ENCODE measurements at regions of chr12 and their contacts with region 1.

Region 1: GRCh38 chr12:64610149-64610678 is at the start of gene RASSF3:
- DNase-seq: peak; percentile 61 to 72 (median 68)
- H3K4me3 ChIP-seq: peak within 1 kb of the TSS; percentile 64 to 98 (median 94)
- H3K4me3 Mint-ChIP-seq: peak within 1 kb of the TSS; percentile 96 to 98
- H3K27ac ChIP-seq: peak within 1 kb of the TSS; percentile 92 to 96
- H3K27ac Mint-ChIP-seq: peak within 1 kb of the TSS; percentile 89 to 99 (median 96)
- H3K4me1 ChIP-seq: peaks cover 42 to 54% of the 10 kb centered on the region in 2 donors
- H3K4me1 Mint-ChIP-seq: peaks cover 42% of the 10 kb centered on the region
- H3K27me3 ChIP-seq: no peaks in the 10 kb centered on the region
- H3K27me3 Mint-ChIP-seq: peaks cover 0 to 1% (median 1%) of the 10 kb centered on the region in 3 donors
- CTCF ChIP-seq: no peak
- polyA plus RNA-seq, gene RASSF3: 6.6 to 77.9 (median 14.5) TPM

Region 2: DNA sequence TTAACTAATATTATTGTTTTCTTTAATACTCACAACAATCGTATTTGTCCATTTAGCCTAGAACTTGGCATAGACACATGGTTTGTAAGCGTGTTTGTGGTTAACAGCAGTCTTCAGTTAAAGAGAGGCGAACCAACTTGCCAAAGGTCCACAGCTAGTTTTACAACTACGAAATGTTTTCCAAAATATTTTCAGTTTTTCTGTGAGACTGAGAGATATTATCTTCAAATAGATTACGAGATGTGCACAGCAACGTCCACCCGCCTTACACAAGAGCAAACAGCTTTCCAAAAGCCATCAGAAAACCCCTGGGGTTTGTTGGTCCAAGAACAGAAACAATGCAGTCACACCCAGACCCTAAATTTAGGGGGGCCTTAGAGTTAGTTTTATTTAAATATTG is 58.5 kb before region 1 on chr12:
- intact Hi-C with region 1: loop called in 1 of 2 experiments (anchors 5 kb)
- DNase-seq: no peak
- H3K4me3 ChIP-seq: no peak overlapping the region
- H3K4me3 Mint-ChIP-seq: no peak overlapping the region
- H3K27ac ChIP-seq: no peak overlapping the region
- H3K27ac Mint-ChIP-seq: no peak overlapping the region
- H3K4me1 ChIP-seq: peaks cover 0 to 6% of the 10 kb centered on the region in 2 donors
- H3K4me1 Mint-ChIP-seq: peaks cover 7% of the 10 kb centered on the region
- H3K27me3 ChIP-seq: no peaks in the 10 kb centered on the region
- H3K27me3 Mint-ChIP-seq: peaks cover 7 to 8% (median 7%) of the 10 kb centered on the region in 3 donors
- CTCF ChIP-seq: no peak

Region 3: GRCh38 chr12:64596252-64596793 is 13.9 kb before region 1 on chr12:
- intact Hi-C with region 1: loop called (anchors 2 kb)
- DNase-seq: peak; percentile 59 to 87 (median 79)
- H3K4me3 ChIP-seq: peak overlapping the region in 1 of 3 experiments; percentile 53
- H3K4me3 Mint-ChIP-seq: peak overlapping the region in 1 of 2 donors; percentile 57
- H3K27ac ChIP-seq: peak overlapping the region; percentile 72 to 84
- H3K27ac Mint-ChIP-seq: peak overlapping the region; percentile 87 to 98 (median 94)
- H3K4me1 ChIP-seq: peaks cover 85 to 93% of the 10 kb centered on the region in 2 donors
- H3K4me1 Mint-ChIP-seq: peaks cover 80% of the 10 kb centered on the region
- H3K27me3 ChIP-seq: no peaks in the 10 kb centered on the region
- H3K27me3 Mint-ChIP-seq: peaks cover 0 to 4% (median 0%) of the 10 kb centered on the region in 3 donors
- CTCF ChIP-seq: no peak

Region 4: GRCh38 chr12:64625243-64626077 is 15.2 kb after region 1 on chr12:
- intact Hi-C with region 1: loop called in 1 of 2 experiments (anchors 2 kb)
- DNase-seq: peak; percentile 95 to 99 (median 95)
- H3K4me3 ChIP-seq: peak overlapping the region; percentile 13 to 59 (median 39)
- H3K4me3 Mint-ChIP-seq: peak overlapping the region; percentile 72 to 78
- H3K27ac ChIP-seq: peak overlapping the region; percentile 96 to 97
- H3K27ac Mint-ChIP-seq: peak overlapping the region; percentile 97 to 99 (median 99)
- H3K4me1 ChIP-seq: peaks cover 79 to 81% of the 10 kb centered on the region in 2 donors
- H3K4me1 Mint-ChIP-seq: peaks cover 73% of the 10 kb centered on the region
- H3K27me3 ChIP-seq: no peaks in the 10 kb centered on the region
- H3K27me3 Mint-ChIP-seq: peaks cover 0 to 2% (median 0%) of the 10 kb centered on the region in 3 donors
- CTCF ChIP-seq: no peak

Region 5: GRCh38 chr12:64650762-64651161 is 40.5 kb after region 1 on chr12:
- intact Hi-C with region 1: no loop called
- DNase-seq: no peak
- H3K4me3 ChIP-seq: no peak overlapping the region
- H3K4me3 Mint-ChIP-seq: no peak overlapping the region
- H3K27ac ChIP-seq: peak overlapping the region in 1 of 2 donors; percentile 2
- H3K27ac Mint-ChIP-seq: peak overlapping the region in 2 of 7 donors; percentile 10 to 15
- H3K4me1 ChIP-seq: peaks cover 12 to 27% of the 10 kb centered on the region in 2 donors
- H3K4me1 Mint-ChIP-seq: peaks cover 48% of the 10 kb centered on the region
- H3K27me3 ChIP-seq: no peaks in the 10 kb centered on the region
- H3K27me3 Mint-ChIP-seq: peaks cover 0 to 2% (median 0%) of the 10 kb centered on the region in 3 donors
- CTCF ChIP-seq: no peak

Region 6: DNA sequence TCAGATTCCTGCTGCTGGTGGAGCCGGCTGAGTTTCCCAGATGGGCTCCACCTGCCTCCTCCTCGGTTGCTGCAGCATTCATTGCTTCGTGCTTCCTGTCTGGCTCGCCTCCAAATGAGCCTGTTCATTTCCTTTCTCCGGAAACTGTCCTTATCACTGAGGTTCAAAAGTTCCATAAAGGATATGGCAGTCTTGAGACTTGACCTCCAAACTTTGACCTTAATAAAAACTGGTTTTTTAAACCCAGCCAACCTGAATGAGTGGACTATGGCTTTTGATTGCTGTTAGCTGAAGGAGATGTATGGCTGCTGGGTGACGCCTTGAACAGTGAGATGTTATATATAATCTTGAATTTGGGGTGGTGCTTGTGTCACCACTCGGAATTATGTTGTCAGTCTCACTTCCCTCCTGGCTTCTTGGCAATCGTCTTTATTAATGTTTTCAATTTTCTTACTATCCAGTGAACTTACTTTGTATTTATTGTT is 62.8 kb after region 1 on chr12:
- intact Hi-C with region 1: loop called in 1 of 2 experiments (anchors 5 kb)
- DNase-seq: peak; percentile 25 to 35 (median 27)
- H3K4me3 ChIP-seq: peak overlapping the region in 1 of 3 experiments; percentile 19
- H3K4me3 Mint-ChIP-seq: peak overlapping the region; percentile 27 to 64
- H3K27ac ChIP-seq: peak overlapping the region; percentile 45 to 49
- H3K27ac Mint-ChIP-seq: peak overlapping the region; percentile 71 to 88 (median 85)
- H3K4me1 ChIP-seq: peaks cover 91 to 97% of the 10 kb centered on the region in 2 donors
- H3K4me1 Mint-ChIP-seq: peaks cover 87% of the 10 kb centered on the region
- H3K27me3 ChIP-seq: no peaks in the 10 kb centered on the region
- H3K27me3 Mint-ChIP-seq: peaks cover 0 to 4% (median 0%) of the 10 kb centered on the region in 3 donors
- CTCF ChIP-seq: no peak

Region 7: GRCh38 chr12:64696080-64696741 is 86.0 kb after region 1 on chr12:
- intact Hi-C with region 1: loop called in 1 of 2 experiments (anchors 5 kb)
- DNase-seq: no peak
- H3K4me3 ChIP-seq: no peak overlapping the region
- H3K4me3 Mint-ChIP-seq: no peak overlapping the region
- H3K27ac ChIP-seq: peak overlapping the region in 1 of 2 donors; percentile 37
- H3K27ac Mint-ChIP-seq: peak overlapping the region in 4 of 7 donors; percentile 33 to 72 (median 44)
- H3K4me1 ChIP-seq: peaks cover 24 to 32% of the 10 kb centered on the region in 2 donors
- H3K4me1 Mint-ChIP-seq: peaks cover 27% of the 10 kb centered on the region
- H3K27me3 ChIP-seq: no peaks in the 10 kb centered on the region
- H3K27me3 Mint-ChIP-seq: peaks cover 0 to 2% (median 0%) of the 10 kb centered on the region in 3 donors
- CTCF ChIP-seq: peak; percentile 37

Region 8: GRCh38 chr12:64759035-64759901 is 149.1 kb after region 1 on chr12 and contains the start of gene GNS:
- intact Hi-C with region 1: loop called in 1 of 2 experiments (anchors 5 kb)
- DNase-seq: peak; percentile 89 to 93 (median 92)
- H3K4me3 ChIP-seq: peak within 1 kb of the TSS; percentile 94 to 99 (median 97)
- H3K4me3 Mint-ChIP-seq: peak within 1 kb of the TSS; percentile 92 to 96
- H3K27ac ChIP-seq: peak within 1 kb of the TSS; percentile 88 to 90
- H3K27ac Mint-ChIP-seq: peak within 1 kb of the TSS; percentile 90 to 95 (median 94)
- H3K4me1 ChIP-seq: peaks cover 62 to 71% of the 10 kb centered on the region in 2 donors
- H3K4me1 Mint-ChIP-seq: peaks cover 65% of the 10 kb centered on the region
- H3K27me3 ChIP-seq: no peaks in the 10 kb centered on the region
- H3K27me3 Mint-ChIP-seq: no peaks in the 10 kb centered on the region
- CTCF ChIP-seq: no peak
- polyA plus RNA-seq, gene GNS: 103 to 274 (median 203) TPM

Measured in CD14-positive monocyte (primary cell).